HepG2 (cell line): ENCODE measurements at regions of chr20 and their contacts with region 1.

Region 1: DNA sequence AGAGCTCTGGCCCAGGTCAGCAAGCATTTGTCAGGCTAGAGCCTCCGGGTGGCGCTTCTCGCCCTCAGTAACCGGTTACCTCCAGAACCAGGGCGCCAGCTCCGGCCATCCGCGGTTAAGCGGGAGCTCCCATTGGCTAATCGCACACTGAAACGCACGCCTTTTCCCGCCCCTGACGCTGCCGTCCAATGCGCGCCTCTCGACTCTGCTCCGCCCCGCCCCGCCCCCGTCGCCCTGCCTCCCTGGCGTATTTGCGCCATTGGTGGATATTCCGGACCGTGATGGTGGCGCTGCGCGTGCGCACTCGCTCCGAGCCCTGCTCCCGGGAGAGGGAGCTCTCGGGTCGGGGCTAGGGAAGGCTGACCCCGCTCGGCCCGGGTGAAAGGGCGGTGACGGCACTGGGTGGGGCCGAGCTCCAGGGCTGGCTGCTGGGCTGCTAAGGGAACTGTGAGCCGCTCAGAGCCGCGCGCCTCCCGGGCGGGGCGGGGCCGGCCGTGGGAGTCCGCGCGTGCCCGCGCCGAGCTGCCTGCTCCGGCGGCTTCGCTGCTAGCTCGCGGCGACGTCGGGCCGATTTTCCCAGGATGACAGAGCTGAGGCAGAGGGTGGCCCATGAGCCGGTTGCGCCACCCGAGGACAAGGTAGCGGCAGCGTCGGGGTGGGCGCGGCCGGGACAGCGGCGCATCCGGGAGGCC is at the start of gene CDS2:
- DNase-seq: peak; percentile 99
- ATAC-seq: peak; percentile 94
- H3K4me3 ChIP-seq: peak within 1 kb of the TSS; percentile 62 to 96 (median 75)
- H3K27ac ChIP-seq: peak within 1 kb of the TSS; percentile 76
- H3K4me1 ChIP-seq: peaks cover 34% of the 10 kb centered on the region
- H3K27me3 ChIP-seq: no peaks in the 10 kb centered on the region; a peak in 1 of 5 replicates
- CTCF ChIP-seq: peak; percentile 92
- EP300 ChIP-seq: peak; percentile 35 to 90; a peak in 3 of 4 replicates
- POLR2A ChIP-seq: peak; percentile 73 to 75
- RAD21 ChIP-seq: peak; percentile 99
- total RNA-seq, gene CDS2: 69.6 and 81.3 TPM in 2 replicates

Region 2: DNA sequence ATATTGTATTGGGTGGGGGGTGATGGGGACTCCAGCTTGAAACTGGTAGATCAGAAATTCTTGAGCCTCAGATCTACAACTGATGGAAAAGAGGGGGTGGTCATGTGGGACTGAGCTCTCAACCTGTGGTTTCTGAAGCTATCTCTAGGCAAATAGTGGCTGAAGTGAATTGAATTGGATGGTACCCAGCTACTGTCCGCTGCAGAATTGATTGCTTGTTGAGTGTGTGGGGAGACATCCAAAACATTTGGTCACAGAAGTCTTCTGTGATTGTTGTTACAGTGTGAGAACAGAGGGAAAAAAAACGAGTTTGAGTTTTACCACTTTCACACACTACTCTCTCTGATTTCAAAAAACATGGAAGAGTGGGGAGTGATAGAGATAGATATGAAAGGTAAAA is 15.0 kb after region 1 on chr20:
- CTCF ChIA-PET with region 1: no interaction called
- POLR2A ChIA-PET with region 1: interaction called, 53 read pairs
- in situ Hi-C with region 1: no loop called
- intact Hi-C with region 1: no loop called
- DNase-seq: no peak
- ATAC-seq: no peak
- H3K4me3 ChIP-seq: no peak overlapping the region
- H3K27ac ChIP-seq: no peak overlapping the region
- H3K4me1 ChIP-seq: peaks cover 67% of the 10 kb centered on the region
- H3K27me3 ChIP-seq: no peaks in the 10 kb centered on the region
- CTCF ChIP-seq: no peak
- EP300 ChIP-seq: no peak
- POLR2A ChIP-seq: no peak
- RAD21 ChIP-seq: no peak

Region 3: DNA sequence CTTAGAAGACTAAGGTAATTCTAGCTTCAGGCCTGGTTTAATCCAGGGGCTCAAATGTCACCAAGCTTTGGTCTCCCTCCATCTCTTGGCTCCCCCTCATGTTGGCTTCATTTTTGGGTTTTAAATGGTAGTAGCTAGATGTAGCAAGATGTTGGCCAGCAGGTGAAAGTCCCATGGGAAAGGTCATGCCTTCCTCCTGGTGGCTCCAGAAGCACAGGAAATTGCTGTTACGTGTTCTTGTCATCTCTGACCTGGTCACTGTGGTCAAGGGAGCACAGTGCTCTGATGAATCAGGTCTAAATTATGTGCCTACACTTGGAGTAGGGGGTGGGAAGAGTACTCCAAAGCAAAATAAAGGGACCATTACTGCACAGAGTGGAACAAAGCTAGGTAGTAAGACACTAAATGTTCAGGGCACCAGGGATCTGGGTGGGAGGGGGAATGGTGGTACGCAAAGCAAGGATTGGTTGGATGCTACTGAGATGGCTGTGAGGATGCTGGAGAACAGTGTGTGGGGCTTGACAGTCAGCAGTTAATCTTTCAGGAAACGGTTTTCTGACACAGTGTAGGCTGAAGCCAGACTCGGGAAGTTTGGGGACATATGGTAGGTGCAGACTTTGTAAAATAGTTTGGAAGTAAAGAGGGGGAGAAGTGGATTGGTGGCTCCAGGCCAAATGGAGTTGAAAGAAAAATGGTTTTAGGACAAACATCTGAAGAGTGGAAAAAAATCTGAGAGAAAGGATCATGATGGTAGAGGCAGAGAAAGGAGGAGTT is 30.2 kb after region 1 on chr20:
- CTCF ChIA-PET with region 1: no interaction called
- POLR2A ChIA-PET with region 1: interaction called, 176 read pairs
- in situ Hi-C with region 1: no loop called
- intact Hi-C with region 1: loop called (anchors 1 kb)
- DNase-seq: peak; percentile 70
- ATAC-seq: peak; percentile 33; the same call in 2 of the 3 replicates
- H3K4me3 ChIP-seq: no peak overlapping the region
- H3K27ac ChIP-seq: peak overlapping the region; percentile 19
- H3K4me1 ChIP-seq: peaks cover 84% of the 10 kb centered on the region
- H3K27me3 ChIP-seq: no peaks in the 10 kb centered on the region
- CTCF ChIP-seq: peak; percentile 46
- EP300 ChIP-seq: peak in 1 of 2 experiments; percentile 72; a peak in 2 of 4 replicates
- POLR2A ChIP-seq: no peak
- RAD21 ChIP-seq: no peak

Region 4: DNA sequence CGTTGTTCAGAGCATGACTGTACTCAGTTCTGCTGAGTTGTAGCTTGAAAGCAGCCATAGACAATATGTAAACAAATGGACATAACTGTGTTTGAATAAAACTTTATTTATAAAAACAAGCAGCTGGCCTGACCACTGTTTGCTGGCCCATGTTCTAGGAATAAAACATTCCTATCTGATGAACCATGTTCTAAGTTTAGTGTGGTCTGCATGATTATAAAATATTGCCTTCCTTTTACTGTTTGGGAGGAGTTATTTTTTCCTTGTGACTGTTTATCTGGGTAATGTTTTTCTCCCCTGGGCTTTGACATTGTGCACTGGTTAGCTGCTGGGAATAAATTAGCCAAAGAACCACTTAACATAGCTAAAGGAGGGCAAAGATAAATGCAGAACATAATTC is 55.3 kb after region 1 on chr20:
- CTCF ChIA-PET with region 1: no interaction called
- POLR2A ChIA-PET with region 1: interaction called, 12 read pairs
- in situ Hi-C with region 1: loop called (anchors 5 kb)
- intact Hi-C with region 1: no loop called
- DNase-seq: no peak
- ATAC-seq: no peak
- H3K4me3 ChIP-seq: no peak overlapping the region
- H3K27ac ChIP-seq: no peak overlapping the region
- H3K4me1 ChIP-seq: peaks cover 27% of the 10 kb centered on the region
- H3K27me3 ChIP-seq: no peaks in the 10 kb centered on the region
- CTCF ChIP-seq: no peak
- EP300 ChIP-seq: no peak
- POLR2A ChIP-seq: no peak
- RAD21 ChIP-seq: no peak

Region 5: DNA sequence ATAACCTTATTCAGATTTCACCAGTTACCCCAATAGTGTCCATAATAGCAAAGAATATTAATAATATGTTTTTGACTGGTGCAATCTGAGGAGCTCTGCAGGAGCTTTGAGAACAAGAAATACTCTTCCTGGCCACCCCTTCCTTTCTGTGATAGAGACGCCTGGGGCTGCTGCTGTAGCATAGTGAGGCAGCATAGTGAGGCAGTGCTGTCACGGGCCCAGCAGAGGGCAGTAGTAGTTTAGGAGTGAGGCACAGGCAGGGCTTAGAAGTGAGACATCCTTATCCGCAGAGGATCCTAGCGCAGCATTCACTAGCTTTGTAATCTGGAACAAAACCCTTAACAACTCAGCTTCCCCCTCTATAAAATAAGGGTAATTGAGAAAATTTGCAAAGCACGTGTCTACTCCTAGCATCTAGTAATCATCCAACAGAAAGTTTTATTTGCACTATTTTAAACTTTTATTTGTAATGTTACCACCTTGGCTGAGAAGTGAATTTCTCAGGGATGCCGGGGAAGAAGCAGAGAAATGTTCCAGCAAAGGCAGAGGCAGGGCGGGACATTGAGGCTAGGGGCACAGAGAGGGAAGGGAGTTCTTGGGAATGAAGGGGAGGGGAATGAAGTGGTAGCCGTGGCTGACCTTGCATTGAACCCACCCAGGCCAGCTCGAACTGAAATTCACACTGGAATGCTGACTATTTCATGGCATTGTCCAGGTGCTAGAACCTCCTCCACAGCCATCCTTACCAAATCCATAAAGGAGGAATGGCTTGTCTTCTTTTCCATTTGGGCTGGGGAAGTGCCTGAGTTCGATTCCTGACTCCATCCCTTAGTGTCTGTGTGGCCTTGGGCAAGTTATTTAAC is 78.9 kb after region 1 on chr20:
- CTCF ChIA-PET with region 1: interaction called, 6 read pairs
- POLR2A ChIA-PET with region 1: interaction called, 7 read pairs
- in situ Hi-C with region 1: no loop called
- intact Hi-C with region 1: loop called (anchors 1 kb)
- DNase-seq: peak; percentile 80
- ATAC-seq: peak; percentile 84
- H3K4me3 ChIP-seq: no peak overlapping the region
- H3K27ac ChIP-seq: no peak overlapping the region
- H3K4me1 ChIP-seq: peaks cover 35% of the 10 kb centered on the region
- H3K27me3 ChIP-seq: no peaks in the 10 kb centered on the region
- CTCF ChIP-seq: peak; percentile 97
- EP300 ChIP-seq: no peak
- POLR2A ChIP-seq: no peak
- RAD21 ChIP-seq: peak; percentile 98